ENCODE measurements at regions of chr17 and their contacts with region 1.

Region 1: DNA sequence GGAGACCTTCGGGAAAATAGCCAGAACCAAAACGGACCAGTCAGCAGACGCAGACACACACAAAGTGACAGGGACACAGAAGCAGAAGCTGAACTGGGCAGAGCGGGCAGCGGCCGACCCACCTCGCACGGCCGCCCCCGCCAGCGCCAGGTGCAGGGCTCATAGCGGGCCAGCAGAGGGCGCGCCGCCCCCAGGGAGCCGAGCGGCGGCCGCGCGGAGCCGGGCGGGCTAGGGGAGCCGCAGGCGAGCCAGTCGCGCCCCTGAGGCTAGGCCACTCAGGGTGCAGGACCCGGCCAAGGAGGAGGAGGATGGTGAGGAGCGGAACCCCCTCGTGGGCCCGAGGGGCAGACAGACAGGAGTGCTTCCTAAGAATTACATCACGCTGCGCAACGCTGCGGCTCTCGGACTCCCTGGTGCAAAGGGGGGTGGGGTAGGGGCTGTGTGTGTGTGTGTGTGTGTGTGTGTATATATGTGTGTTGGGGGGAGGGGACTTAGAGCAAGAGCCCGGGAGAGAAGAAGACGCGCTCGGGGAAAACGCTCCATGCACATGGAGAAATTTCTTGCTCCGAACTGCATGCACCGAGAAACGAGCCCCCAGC is 913 bp upstream of the NOG start:
- DNase-seq: peak; percentile 63
- ATAC-seq: peak; percentile 79 to 81

Region 2: GRCh38 chr17:56629531-56630075 is 37.0 kb after region 1 on chr17:
- intact Hi-C with region 1: no loop called
- DNase-seq: no peak
- ATAC-seq: peak in 1 of 2 donors; percentile 30

Region 3: GRCh38 chr17:56723421-56723820 is 130.8 kb after region 1 on chr17:
- intact Hi-C with region 1: loop called in 1 of 2 experiments (anchors 5 kb)
- DNase-seq: no peak
- ATAC-seq: no peak

Region 4: GRCh38 chr17:56779898-56780733 is 187.5 kb after region 1 on chr17:
- intact Hi-C with region 1: loop called in 1 of 2 experiments (anchors 2 kb)
- DNase-seq: peak; percentile 80
- ATAC-seq: peak; percentile 93 to 97

Measured in left cardiac atrium (tissue), 4 donors.